Breast epithelium (tissue), 4 donors: ENCODE measurements at regions of chr1 and their contacts with region 1.

Region 1: GRCh38 chr1:206918076-206918475 is 3.7 kb downstream of the FCMR start:
- DNase-seq: no peak
- H3K4me3 ChIP-seq: no peak overlapping the region
- H3K27ac ChIP-seq: no peak overlapping the region
- H3K4me1 ChIP-seq: no peaks in the 10 kb centered on the region
- H3K27me3 ChIP-seq: no peaks in the 10 kb centered on the region
- CTCF ChIP-seq: no peak
- POLR2A ChIP-seq: no peak

Region 2: DNA sequence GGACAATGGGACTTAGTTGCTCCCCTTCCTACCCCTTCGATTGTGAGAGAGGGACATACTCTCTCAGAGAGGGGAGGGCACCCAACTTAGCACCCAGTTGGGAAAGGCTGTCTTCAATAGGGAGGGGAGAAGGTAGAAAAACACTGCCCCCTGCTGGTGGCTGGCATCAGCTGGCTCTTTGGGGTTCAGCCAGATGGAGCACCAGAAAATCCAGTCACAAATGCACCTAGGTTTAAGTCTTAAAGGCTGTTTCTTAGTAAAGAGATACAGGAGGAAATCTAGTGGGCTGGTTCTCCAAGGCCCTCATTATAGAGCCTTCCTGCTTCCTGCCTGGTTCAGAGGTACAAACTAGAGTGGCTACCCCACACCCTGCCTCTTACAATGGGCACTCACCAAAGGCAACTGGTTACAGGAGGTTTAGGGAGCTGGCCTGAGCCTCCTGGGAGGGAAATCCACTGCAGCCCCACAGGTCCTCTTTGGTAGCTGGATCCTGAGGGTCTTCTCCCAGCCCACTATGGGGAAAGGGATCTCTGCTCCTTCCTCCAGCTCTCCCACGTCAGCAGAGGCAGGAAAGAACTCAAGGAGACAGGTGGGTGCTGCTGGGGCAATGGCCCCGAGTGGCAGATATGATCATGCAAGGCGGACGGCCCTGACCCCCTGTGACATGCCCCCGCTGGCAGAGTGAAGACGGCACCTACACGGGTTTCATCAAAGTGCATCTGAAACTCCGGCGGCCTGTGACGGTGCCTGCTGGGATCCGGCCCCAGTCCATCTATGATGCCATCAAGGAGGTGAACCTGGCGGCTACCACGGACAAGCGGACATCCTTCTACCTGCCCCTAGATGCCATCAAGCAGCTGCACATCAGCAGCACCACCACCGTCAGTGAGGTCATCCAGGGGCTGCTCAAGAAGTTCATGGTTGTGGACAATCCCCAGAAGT is 334.1 kb before region 1 on chr1:
- intact Hi-C with region 1: no loop called
- DNase-seq: peak; percentile 64 to 81
- H3K4me3 ChIP-seq: no peak overlapping the region
- H3K27ac ChIP-seq: no peak overlapping the region
- H3K4me1 ChIP-seq: peaks cover 0 to 6% of the 10 kb centered on the region in 2 donors
- H3K27me3 ChIP-seq: no peaks in the 10 kb centered on the region
- CTCF ChIP-seq: peak; percentile 72 to 85 (median 83)
- POLR2A ChIP-seq: no peak

Region 3: DNA sequence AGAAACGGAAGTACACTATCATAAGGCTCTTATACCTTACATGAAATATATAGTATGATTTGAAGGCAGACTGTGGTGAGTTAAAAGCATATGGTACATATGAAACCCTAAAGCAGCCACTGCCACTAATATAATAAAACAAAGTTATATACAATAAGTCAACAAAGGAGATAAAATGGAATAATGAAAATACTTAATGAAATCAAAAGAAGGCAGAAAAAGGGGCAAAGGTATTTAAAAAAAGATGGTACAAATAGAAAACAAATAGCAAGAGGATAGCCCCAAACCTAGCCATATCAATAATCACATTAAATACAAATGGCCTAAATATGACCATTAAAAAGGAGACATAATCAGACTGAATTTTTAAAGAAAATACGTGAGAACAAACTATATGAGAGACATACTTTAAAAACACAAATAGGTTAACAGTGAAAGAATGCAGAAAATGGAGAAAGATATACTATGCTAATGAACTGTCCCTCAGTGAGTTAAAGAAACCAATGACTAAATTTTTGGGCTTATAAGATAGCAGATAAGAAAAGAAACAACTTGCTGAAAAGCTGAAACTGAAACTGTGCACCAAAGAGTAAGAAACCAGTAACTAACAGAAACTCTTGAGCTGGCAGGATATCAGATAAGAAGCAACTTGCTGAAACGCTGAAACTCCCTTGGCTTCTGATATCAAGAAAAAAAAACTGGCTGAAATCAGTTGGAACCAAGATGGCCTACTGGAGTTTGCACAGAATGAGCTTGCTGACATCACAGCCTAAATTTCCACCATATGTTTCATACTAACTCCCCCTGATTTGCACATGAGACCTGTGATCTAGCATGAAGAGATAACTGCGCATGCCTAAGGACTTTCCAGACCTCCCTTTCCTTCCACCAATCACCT is 101.4 kb before region 1 on chr1:
- intact Hi-C with region 1: loop called (anchors 2 kb)
- DNase-seq: no peak
- H3K4me3 ChIP-seq: no peak overlapping the region
- H3K27ac ChIP-seq: no peak overlapping the region
- H3K4me1 ChIP-seq: no peaks in the 10 kb centered on the region
- H3K27me3 ChIP-seq: no peaks in the 10 kb centered on the region
- CTCF ChIP-seq: no peak
- POLR2A ChIP-seq: no peak